ENCODE measurements at regions of chr22 and their contacts with region 1.

Region 1: GRCh38 chr22:36775964-36776669 is at the start of gene IFT27:
- DNase-seq: peak; percentile 88 to 100 (median 94)
- ATAC-seq: peak; percentile 86
- H3K4me3 ChIP-seq: peak within 1 kb of the TSS; percentile 80
- H3K4me3 Mint-ChIP-seq: peak within 1 kb of the TSS; percentile 92
- H3K27ac ChIP-seq: peak within 1 kb of the TSS; percentile 84 to 90
- H3K27ac Mint-ChIP-seq: peak within 1 kb of the TSS; percentile 93
- H3K4me1 ChIP-seq: peaks cover 21% of the 10 kb centered on the region
- H3K4me1 Mint-ChIP-seq: peaks cover 29% of the 10 kb centered on the region
- H3K27me3 ChIP-seq: no peaks in the 10 kb centered on the region
- H3K27me3 Mint-ChIP-seq: no peaks in the 10 kb centered on the region
- CTCF ChIP-seq: no peak
- total RNA-seq, gene IFT27: 10.2 to 10.9 TPM

Region 2: GRCh38 chr22:35257321-35258190 is 1518.6 kb before region 1 on chr22 and contains the start of gene HMGXB4:
- CTCF ChIA-PET with region 1: no interaction called
- POLR2A ChIA-PET with region 1: no interaction called
- intact Hi-C with region 1: loop called in 1 of 2 experiments (anchors 5 kb)
- DNase-seq: peak; percentile 77 to 94 (median 82)
- ATAC-seq: peak; percentile 93
- H3K4me3 ChIP-seq: peak within 1 kb of the TSS; percentile 72
- H3K4me3 Mint-ChIP-seq: peak within 1 kb of the TSS; percentile 94
- H3K27ac ChIP-seq: peak within 1 kb of the TSS; percentile 60 to 85
- H3K27ac Mint-ChIP-seq: peak within 1 kb of the TSS; percentile 94
- H3K4me1 ChIP-seq: peaks cover 14% of the 10 kb centered on the region
- H3K4me1 Mint-ChIP-seq: peaks cover 31% of the 10 kb centered on the region
- H3K27me3 ChIP-seq: no peaks in the 10 kb centered on the region
- H3K27me3 Mint-ChIP-seq: no peaks in the 10 kb centered on the region
- CTCF ChIP-seq: peak; percentile 15
- total RNA-seq, gene HMGXB4: 41.4 to 44.1 TPM

Region 3: GRCh38 chr22:36470162-36470993 is 305.7 kb before region 1 on chr22:
- CTCF ChIA-PET with region 1: no interaction called
- POLR2A ChIA-PET with region 1: no interaction called
- intact Hi-C with region 1: no loop called
- DNase-seq: peak; percentile 71 to 92 (median 78)
- ATAC-seq: peak; percentile 98
- H3K4me3 ChIP-seq: no peak overlapping the region
- H3K4me3 Mint-ChIP-seq: no peak overlapping the region
- H3K27ac ChIP-seq: no peak overlapping the region
- H3K27ac Mint-ChIP-seq: peak overlapping the region; percentile 70
- H3K4me1 ChIP-seq: peaks cover 27% of the 10 kb centered on the region
- H3K4me1 Mint-ChIP-seq: peaks cover 26% of the 10 kb centered on the region
- H3K27me3 ChIP-seq: no peaks in the 10 kb centered on the region
- H3K27me3 Mint-ChIP-seq: no peaks in the 10 kb centered on the region
- CTCF ChIP-seq: peak; percentile 89

Region 4: DNA sequence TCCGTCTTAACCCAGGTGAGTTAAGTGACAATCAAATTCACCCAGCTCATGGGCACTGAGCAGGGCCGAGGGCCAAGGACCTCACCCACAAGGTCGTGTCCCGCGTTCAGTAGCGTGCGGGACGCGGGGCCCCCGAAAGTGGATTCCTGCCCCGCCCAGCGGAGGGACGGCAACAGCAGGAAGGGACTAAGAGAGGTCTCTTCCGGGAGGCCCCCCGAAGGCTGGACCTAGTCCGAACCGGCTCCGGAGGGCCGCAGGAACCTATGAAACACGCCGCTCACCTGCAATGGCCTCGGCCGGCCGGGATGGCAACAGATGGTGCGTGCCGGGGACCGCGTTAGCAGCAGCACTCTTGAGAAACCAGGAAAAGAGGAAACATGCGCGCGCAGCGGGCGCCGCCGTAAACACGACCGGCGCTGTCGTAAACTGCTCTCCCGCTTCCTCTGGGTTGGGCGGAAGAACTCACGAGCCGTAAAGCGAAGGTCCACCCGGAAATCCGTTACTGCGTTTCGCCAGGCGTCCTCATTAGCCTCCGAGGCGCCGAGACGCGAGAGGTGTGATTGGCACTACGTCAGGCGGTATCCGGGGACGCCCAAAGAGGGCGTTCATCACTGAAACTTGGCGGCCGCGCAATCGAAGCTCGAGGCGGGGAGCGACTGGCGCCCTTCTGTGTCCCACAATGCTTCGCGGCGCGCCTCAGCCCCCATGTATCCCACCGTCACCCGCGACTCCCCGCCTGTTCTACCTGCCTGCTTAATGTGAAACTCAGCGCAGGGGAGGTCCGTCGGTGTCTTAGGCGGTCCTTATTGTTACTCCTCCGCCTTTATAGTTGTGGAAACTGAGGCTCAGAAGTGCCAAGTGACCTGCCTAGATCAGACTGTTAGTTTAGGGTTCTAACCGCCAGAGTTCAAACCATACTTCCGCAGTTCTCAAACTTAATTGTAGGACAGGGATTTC is 247.0 kb before region 1 on chr22 and contains the start of gene EIF3D:
- CTCF ChIA-PET with region 1: no interaction called
- POLR2A ChIA-PET with region 1: interaction called, 13 read pairs
- intact Hi-C with region 1: loop called in 1 of 2 experiments (anchors 5 kb)
- DNase-seq: peak; percentile 95 to 100 (median 98)
- ATAC-seq: peak; percentile 91
- H3K4me3 ChIP-seq: peak within 1 kb of the TSS; percentile 95
- H3K4me3 Mint-ChIP-seq: peak within 1 kb of the TSS; percentile 92
- H3K27ac ChIP-seq: peak within 1 kb of the TSS; percentile 87 to 94
- H3K27ac Mint-ChIP-seq: peak within 1 kb of the TSS; percentile 93
- H3K4me1 ChIP-seq: peaks cover 19% of the 10 kb centered on the region
- H3K4me1 Mint-ChIP-seq: peaks cover 26% of the 10 kb centered on the region
- H3K27me3 ChIP-seq: no peaks in the 10 kb centered on the region
- H3K27me3 Mint-ChIP-seq: no peaks in the 10 kb centered on the region
- CTCF ChIP-seq: no peak
- total RNA-seq, gene EIF3D: 285 to 286 TPM

Region 5: GRCh38 chr22:36757668-36758211 is 18.4 kb before region 1 on chr22:
- CTCF ChIA-PET with region 1: interaction called, 10 read pairs
- POLR2A ChIA-PET with region 1: interaction called, 4 read pairs
- intact Hi-C with region 1: no loop called
- DNase-seq: peak; percentile 58 to 83 (median 72)
- ATAC-seq: peak; percentile 79
- H3K4me3 ChIP-seq: no peak overlapping the region
- H3K4me3 Mint-ChIP-seq: no peak overlapping the region
- H3K27ac ChIP-seq: no peak overlapping the region
- H3K27ac Mint-ChIP-seq: no peak overlapping the region
- H3K4me1 ChIP-seq: peaks cover 4% of the 10 kb centered on the region
- H3K4me1 Mint-ChIP-seq: peaks cover 4% of the 10 kb centered on the region
- H3K27me3 ChIP-seq: peaks cover under 1 to 10% of the 10 kb centered on the region in 2 experiments
- H3K27me3 Mint-ChIP-seq: peaks cover 13% of the 10 kb centered on the region
- CTCF ChIP-seq: peak; percentile 75

Region 6: DNA sequence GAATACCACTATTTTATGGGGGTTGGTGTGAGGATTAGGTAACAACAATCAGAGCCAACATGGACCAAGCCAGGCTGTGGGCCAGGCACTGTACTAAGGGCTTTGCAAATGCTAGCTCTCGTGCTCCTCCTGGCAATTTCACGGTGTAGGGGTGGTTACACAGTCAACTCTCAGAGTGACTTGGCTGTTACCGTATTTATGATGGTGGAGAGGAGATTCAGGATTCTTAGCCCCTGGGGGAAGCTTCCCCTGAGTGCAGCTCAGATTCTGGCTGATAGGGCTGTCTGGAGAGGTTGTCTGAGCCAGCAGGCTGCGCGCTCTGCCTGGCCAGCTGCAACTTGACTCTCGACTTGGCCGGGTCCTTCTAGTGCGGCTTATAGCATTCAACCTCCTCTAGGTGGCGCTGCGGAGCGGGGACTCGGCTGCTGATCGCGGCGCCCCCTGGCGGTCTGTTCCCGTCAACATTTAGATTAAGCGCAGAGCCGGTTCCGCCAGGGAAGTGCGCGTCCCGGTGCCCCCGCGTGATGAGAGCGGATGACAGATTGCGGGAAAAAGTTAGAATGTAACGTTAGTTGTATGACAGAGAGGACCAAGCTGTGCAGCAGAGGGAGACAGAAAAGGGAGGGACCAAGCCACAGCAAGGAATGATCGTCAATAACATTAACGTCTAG is 80.1 kb after region 1 on chr22:
- CTCF ChIA-PET with region 1: interaction called, 30 read pairs
- POLR2A ChIA-PET with region 1: interaction called, 16 read pairs
- intact Hi-C with region 1: loop called in 1 of 2 experiments (anchors 1 kb)
- DNase-seq: peak; percentile 84 to 99 (median 94)
- ATAC-seq: peak; percentile 71
- H3K4me3 ChIP-seq: no peak overlapping the region
- H3K4me3 Mint-ChIP-seq: peak overlapping the region; percentile 65
- H3K27ac ChIP-seq: no peak overlapping the region
- H3K27ac Mint-ChIP-seq: no peak overlapping the region
- H3K4me1 ChIP-seq: peaks cover 32% of the 10 kb centered on the region
- H3K4me1 Mint-ChIP-seq: peaks cover 17% of the 10 kb centered on the region
- H3K27me3 ChIP-seq: no peaks in the 10 kb centered on the region
- H3K27me3 Mint-ChIP-seq: peaks cover 5% of the 10 kb centered on the region
- CTCF ChIP-seq: peak; percentile 100

Region 7: GRCh38 chr22:36901411-36902142 is 125.5 kb after region 1 on chr22:
- CTCF ChIA-PET with region 1: no interaction called
- POLR2A ChIA-PET with region 1: no interaction called
- intact Hi-C with region 1: no loop called
- DNase-seq: peak in 3 of 14 experiments; percentile 17 to 41 (median 31)
- ATAC-seq: no peak
- H3K4me3 ChIP-seq: no peak overlapping the region
- H3K4me3 Mint-ChIP-seq: no peak overlapping the region
- H3K27ac ChIP-seq: no peak overlapping the region
- H3K27ac Mint-ChIP-seq: no peak overlapping the region
- H3K4me1 ChIP-seq: peaks cover 15% of the 10 kb centered on the region
- H3K4me1 Mint-ChIP-seq: peaks cover 6% of the 10 kb centered on the region
- H3K27me3 ChIP-seq: peaks cover 5 to 15% of the 10 kb centered on the region in 2 experiments
- H3K27me3 Mint-ChIP-seq: peaks cover 58% of the 10 kb centered on the region
- CTCF ChIP-seq: no peak

Region 8: DNA sequence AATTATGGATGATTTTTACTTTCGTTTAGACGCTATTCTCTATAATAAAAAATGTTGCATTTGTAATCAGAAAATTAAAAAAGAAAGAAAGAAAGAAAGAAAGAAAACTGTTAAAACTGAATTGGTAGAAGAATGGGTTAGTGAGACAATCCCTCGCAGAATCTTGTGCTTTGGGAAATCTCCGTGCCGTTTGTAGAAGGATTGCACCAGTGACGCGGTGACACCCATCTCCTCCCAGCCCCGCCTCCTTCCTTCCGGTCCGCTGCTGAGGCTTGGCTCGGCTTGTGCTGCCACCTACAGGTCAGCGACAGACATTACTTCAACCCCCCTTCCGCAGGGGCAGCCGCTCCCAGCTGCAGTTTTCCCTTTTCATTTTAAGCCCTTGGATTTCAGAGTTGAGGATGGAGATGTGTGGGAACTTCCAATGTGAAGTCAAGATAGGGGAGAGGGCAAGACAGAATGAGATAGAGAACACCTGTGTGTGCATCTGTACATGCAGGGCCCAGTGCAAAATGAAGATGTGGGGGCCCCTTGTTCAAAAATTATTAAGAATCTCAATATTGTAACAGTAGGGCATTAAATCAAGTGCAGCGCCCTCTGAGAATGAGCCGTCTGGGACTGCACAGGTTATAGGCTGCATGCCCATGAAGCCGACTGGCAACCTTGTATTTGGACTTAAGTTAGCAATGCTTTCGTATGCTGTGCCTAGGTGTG is 202.0 kb after region 1 on chr22:
- CTCF ChIA-PET with region 1: interaction called, 9 read pairs
- POLR2A ChIA-PET with region 1: interaction called, 21 read pairs
- intact Hi-C with region 1: no loop called
- DNase-seq: peak; percentile 83 to 95 (median 88)
- ATAC-seq: peak; percentile 88
- H3K4me3 ChIP-seq: peak overlapping the region; percentile 77
- H3K4me3 Mint-ChIP-seq: peak overlapping the region; percentile 97
- H3K27ac ChIP-seq: peak overlapping the region; percentile 16 to 62
- H3K27ac Mint-ChIP-seq: peak overlapping the region; percentile 92
- H3K4me1 ChIP-seq: peaks cover 15% of the 10 kb centered on the region
- H3K4me1 Mint-ChIP-seq: peaks cover 8% of the 10 kb centered on the region
- H3K27me3 ChIP-seq: peaks cover 0 to 5% of the 10 kb centered on the region in 2 experiments
- H3K27me3 Mint-ChIP-seq: peaks cover 5% of the 10 kb centered on the region
- CTCF ChIP-seq: peak; percentile 88

Region 9: GRCh38 chr22:37051391-37052385 is 275.6 kb after region 1 on chr22 and contains the start of gene KCTD17:
- CTCF ChIA-PET with region 1: no interaction called
- POLR2A ChIA-PET with region 1: interaction called, 7 read pairs
- intact Hi-C with region 1: loop called in 1 of 2 experiments (anchors 1 kb)
- DNase-seq: peak; percentile 39 to 87 (median 72)
- ATAC-seq: peak; percentile 99
- H3K4me3 ChIP-seq: peak within 1 kb of the TSS; percentile 57
- H3K4me3 Mint-ChIP-seq: peak within 1 kb of the TSS; percentile 88
- H3K27ac ChIP-seq: no peak within 1 kb of the TSS
- H3K27ac Mint-ChIP-seq: peak within 1 kb of the TSS; percentile 69
- H3K4me1 ChIP-seq: peaks cover 28% of the 10 kb centered on the region
- H3K4me1 Mint-ChIP-seq: peaks cover 5% of the 10 kb centered on the region
- H3K27me3 ChIP-seq: no peaks in the 10 kb centered on the region
- H3K27me3 Mint-ChIP-seq: no peaks in the 10 kb centered on the region
- CTCF ChIP-seq: no peak
- total RNA-seq, gene KCTD17: 17.3 to 17.9 TPM